MCF 10A (cell line): ENCODE measurements at regions of chrX and their contacts with region 1.

Region 1: DNA sequence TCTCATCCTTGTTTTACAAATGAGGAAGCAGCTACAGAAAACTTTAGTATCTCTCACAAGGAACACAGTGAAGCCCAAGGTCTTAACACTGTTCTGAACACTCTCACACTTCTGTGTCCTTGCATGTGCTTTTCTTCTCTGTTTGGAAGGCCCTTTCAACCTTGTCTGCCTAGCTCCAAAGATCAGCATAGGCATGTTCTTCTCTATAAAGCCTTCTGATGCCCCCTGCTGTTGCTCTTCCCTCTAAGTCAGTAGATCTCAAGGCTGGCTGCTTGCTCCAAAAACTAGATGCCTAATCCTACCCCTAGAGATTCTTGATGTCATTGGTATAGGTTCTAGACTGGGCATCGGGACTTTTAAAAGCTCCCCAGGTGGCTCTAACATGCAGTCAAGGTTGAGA is 5.9 kb downstream of the APOO start:
- DNase-seq: peak; percentile 87
- H3K4me3 Mint-ChIP-seq: no peak overlapping the region
- H3K27ac Mint-ChIP-seq: no peak overlapping the region
- H3K4me1 Mint-ChIP-seq: peaks cover 16% of the 10 kb centered on the region
- H3K27me3 Mint-ChIP-seq: no peaks in the 10 kb centered on the region
- CTCF ChIP-seq: peak; percentile 56

Region 2: GRCh38 chrX:23616361-23616760 is 285.4 kb before region 1 on chrX:
- CTCF ChIA-PET with region 1: interaction called, 5 read pairs
- POLR2A ChIA-PET with region 1: no interaction called
- intact Hi-C with region 1: loop called (anchors 1 kb)
- DNase-seq: peak; percentile 27
- H3K4me3 Mint-ChIP-seq: no peak overlapping the region
- H3K27ac Mint-ChIP-seq: no peak overlapping the region
- H3K4me1 Mint-ChIP-seq: no peaks in the 10 kb centered on the region
- H3K27me3 Mint-ChIP-seq: peaks cover 41% of the 10 kb centered on the region
- CTCF ChIP-seq: peak; percentile 50

Region 3: DNA sequence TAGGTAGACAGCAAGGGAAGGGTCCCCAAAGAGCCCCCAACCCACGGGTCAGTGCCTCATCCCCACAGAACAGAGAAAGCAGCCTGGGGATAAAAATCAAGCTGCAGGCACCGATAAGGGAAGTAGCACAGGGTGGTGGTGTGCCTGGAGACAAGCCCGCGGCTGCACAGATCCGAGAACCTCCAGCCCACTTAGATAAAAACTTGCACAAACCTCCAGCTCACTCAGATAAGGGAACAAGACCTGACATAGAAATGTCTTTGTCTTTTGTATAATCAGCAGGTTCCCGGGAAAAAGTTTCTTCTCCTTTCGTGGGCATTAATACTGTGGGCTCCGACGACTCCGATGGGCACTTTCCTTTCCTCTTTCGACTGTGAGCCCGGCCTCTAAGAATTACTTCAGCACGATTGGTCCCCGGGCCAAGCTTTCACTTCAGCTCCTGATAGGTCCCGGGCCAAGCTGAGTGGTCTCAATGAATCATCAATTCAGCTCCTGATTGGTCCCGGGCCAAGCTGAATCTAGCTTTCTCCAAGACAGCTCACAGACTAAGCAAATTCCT is 202.1 kb before region 1 on chrX:
- CTCF ChIA-PET with region 1: interaction called, 137 read pairs
- POLR2A ChIA-PET with region 1: interaction called, 13 read pairs
- intact Hi-C with region 1: loop called (anchors 1 kb)
- DNase-seq: no peak
- H3K4me3 Mint-ChIP-seq: no peak overlapping the region
- H3K27ac Mint-ChIP-seq: no peak overlapping the region
- H3K4me1 Mint-ChIP-seq: no peaks in the 10 kb centered on the region
- H3K27me3 Mint-ChIP-seq: peaks cover 13% of the 10 kb centered on the region
- CTCF ChIP-seq: no peak

Region 4: DNA sequence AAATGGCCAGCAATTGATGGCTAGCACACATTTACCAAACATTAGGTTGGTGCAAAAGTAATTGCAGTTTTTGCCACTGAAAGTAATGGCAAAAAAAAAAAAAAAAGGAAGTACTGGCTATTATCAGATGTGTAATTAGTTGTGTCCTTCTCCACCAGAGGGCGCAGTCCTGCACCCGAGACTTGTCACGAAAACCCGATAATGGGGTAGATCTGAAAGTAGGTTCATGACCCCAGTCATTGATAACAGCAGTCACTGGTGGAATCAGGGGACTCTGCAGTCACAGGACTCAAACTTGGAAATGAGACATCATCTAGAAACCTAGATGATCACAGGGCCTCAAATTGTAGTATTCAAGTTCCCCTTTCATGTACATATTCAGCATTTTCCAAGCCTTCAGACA is 145.6 kb before region 1 on chrX:
- CTCF ChIA-PET with region 1: interaction called, 23 read pairs
- POLR2A ChIA-PET with region 1: no interaction called
- intact Hi-C with region 1: loop called (anchors 1 kb)
- DNase-seq: peak; percentile 79
- H3K4me3 Mint-ChIP-seq: no peak overlapping the region
- H3K27ac Mint-ChIP-seq: no peak overlapping the region
- H3K4me1 Mint-ChIP-seq: peaks cover 6% of the 10 kb centered on the region
- H3K27me3 Mint-ChIP-seq: no peaks in the 10 kb centered on the region
- CTCF ChIP-seq: peak; percentile 65

Region 5: GRCh38 chrX:23797371-23798128 is 104.3 kb before region 1 on chrX:
- CTCF ChIA-PET with region 1: interaction called, 13 read pairs
- POLR2A ChIA-PET with region 1: interaction called, 21 read pairs
- intact Hi-C with region 1: loop called (anchors 5 kb)
- DNase-seq: no peak
- H3K4me3 Mint-ChIP-seq: no peak overlapping the region
- H3K27ac Mint-ChIP-seq: no peak overlapping the region
- H3K4me1 Mint-ChIP-seq: no peaks in the 10 kb centered on the region
- H3K27me3 Mint-ChIP-seq: no peaks in the 10 kb centered on the region
- CTCF ChIP-seq: no peak

Region 6: GRCh38 chrX:23883737-23884354 is 18.0 kb before region 1 on chrX:
- CTCF ChIA-PET with region 1: interaction called, 16 read pairs
- POLR2A ChIA-PET with region 1: interaction called, 16 read pairs
- intact Hi-C with region 1: no loop called
- DNase-seq: peak; percentile 87
- H3K4me3 Mint-ChIP-seq: peak overlapping the region; percentile 30
- H3K27ac Mint-ChIP-seq: peak overlapping the region; percentile 65
- H3K4me1 Mint-ChIP-seq: peaks cover 19% of the 10 kb centered on the region
- H3K27me3 Mint-ChIP-seq: no peaks in the 10 kb centered on the region
- CTCF ChIP-seq: no peak

Region 7: GRCh38 chrX:24054182-24055042 is 152.6 kb after region 1 on chrX and contains the start of gene EIF2S3:
- CTCF ChIA-PET with region 1: interaction called, 18 read pairs
- POLR2A ChIA-PET with region 1: interaction called, 43 read pairs
- intact Hi-C with region 1: no loop called
- DNase-seq: peak; percentile 98
- H3K4me3 Mint-ChIP-seq: no peak within 1 kb of the TSS
- H3K27ac Mint-ChIP-seq: peak within 1 kb of the TSS; percentile 99
- H3K4me1 Mint-ChIP-seq: no peaks in the 10 kb centered on the region
- H3K27me3 Mint-ChIP-seq: peaks cover 10% of the 10 kb centered on the region
- CTCF ChIP-seq: peak; percentile 50
- total RNA-seq, gene EIF2S3: 354 and 391 TPM in 2 replicates